Calu3 (cell line): ENCODE measurements at regions of chr4 and their contacts with region 1.

Region 1: GRCh38 chr4:175536852-175537453 is 275.1 kb downstream of the GPM6A start:
- DNase-seq: peak; percentile 6
- H3K4me3 Mint-ChIP-seq: no peak overlapping the region
- H3K27ac Mint-ChIP-seq: no peak overlapping the region
- H3K4me1 Mint-ChIP-seq: peaks cover 12% of the 10 kb centered on the region
- H3K27me3 Mint-ChIP-seq: no peaks in the 10 kb centered on the region
- CTCF ChIP-seq: no peak

Region 2: DNA sequence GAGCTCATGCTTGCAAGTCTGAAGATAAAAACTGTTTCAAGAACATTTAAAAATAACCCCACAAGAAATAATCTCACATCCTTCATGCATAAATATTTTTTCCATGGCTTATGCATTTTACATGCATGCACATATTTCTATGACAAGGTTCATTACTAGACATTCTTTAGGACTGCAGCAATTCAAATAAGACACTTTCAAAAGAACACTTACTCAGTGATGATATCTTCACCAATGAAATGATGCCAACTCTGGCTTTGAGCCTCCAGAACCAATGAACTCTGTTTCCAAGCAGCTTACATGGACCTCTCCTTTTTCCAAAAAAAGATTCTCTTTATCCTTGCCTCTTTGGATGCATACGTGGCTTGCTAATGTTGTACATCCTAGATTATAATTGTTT is 338.9 kb before region 1 on chr4:
- CTCF ChIA-PET with region 1: no interaction called
- intact Hi-C with region 1: loop called (anchors 10 kb)
- DNase-seq: no peak
- H3K4me3 Mint-ChIP-seq: no peak overlapping the region
- H3K27ac Mint-ChIP-seq: no peak overlapping the region
- H3K4me1 Mint-ChIP-seq: peaks cover 11% of the 10 kb centered on the region
- H3K27me3 Mint-ChIP-seq: no peaks in the 10 kb centered on the region
- CTCF ChIP-seq: no peak

Region 3: GRCh38 chr4:175373031-175373430 is 163.9 kb before region 1 on chr4:
- CTCF ChIA-PET with region 1: no interaction called
- intact Hi-C with region 1: loop called (anchors 10 kb)
- DNase-seq: no peak
- H3K4me3 Mint-ChIP-seq: no peak overlapping the region
- H3K27ac Mint-ChIP-seq: no peak overlapping the region
- H3K4me1 Mint-ChIP-seq: no peaks in the 10 kb centered on the region
- H3K27me3 Mint-ChIP-seq: no peaks in the 10 kb centered on the region
- CTCF ChIP-seq: no peak